Activated CD4-positive, alpha-beta memory T cell treated with anti-CD3 and anti-CD28 coated beads for 36 hours (primary cell): ENCODE measurements at regions of chr12 and their contacts with region 1.

Region 1: GRCh38 chr12:94710933-94711332 is 60.6 kb upstream of the TMCC3 start:
- DNase-seq: peak; percentile 32
- H3K4me3 Mint-ChIP-seq: no peak overlapping the region
- H3K27ac Mint-ChIP-seq: no peak overlapping the region
- H3K4me1 Mint-ChIP-seq: peaks cover 4% of the 10 kb centered on the region
- H3K27me3 Mint-ChIP-seq: no peaks in the 10 kb centered on the region

Region 2: DNA sequence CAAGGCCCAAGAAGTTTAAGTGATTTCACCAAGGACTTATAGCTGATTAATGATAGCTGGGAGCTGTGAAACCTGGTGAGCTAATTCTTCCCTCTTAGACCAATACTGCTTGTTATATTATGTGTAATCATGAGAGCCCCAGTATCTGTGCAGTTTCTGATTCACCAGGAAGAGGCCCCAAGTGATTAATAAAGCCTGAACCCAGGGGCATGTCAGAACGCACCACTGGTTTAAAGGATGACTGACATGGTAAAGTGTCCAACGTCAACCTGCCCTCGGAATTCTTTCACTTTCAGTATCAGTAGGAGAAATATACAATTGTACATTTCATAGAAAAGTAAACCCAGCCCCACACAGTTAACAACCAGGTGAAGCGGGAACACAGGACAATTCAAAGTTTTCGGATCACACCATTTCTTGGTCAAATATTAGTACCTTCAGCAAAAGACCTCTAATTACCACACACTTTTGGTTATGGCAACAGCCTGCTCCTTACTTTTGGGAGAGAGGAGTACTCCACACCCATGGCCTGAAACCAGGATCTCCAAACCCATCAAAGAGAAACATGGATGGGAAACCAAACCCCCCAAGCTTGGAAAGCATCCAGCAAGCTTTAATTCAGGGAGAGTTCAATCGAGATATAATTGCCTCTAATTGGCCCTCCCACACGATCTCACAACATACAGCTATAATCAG is 89.1 kb before region 1 on chr12:
- CTCF ChIA-PET with region 1: no interaction called
- POLR2A ChIA-PET with region 1: no interaction called
- intact Hi-C with region 1: loop called (anchors 1 kb)
- DNase-seq: peak; percentile 67
- H3K4me3 Mint-ChIP-seq: peak overlapping the region; percentile 23
- H3K27ac Mint-ChIP-seq: peak overlapping the region; percentile 56
- H3K4me1 Mint-ChIP-seq: peaks cover 22% of the 10 kb centered on the region
- H3K27me3 Mint-ChIP-seq: no peaks in the 10 kb centered on the region

Region 3: DNA sequence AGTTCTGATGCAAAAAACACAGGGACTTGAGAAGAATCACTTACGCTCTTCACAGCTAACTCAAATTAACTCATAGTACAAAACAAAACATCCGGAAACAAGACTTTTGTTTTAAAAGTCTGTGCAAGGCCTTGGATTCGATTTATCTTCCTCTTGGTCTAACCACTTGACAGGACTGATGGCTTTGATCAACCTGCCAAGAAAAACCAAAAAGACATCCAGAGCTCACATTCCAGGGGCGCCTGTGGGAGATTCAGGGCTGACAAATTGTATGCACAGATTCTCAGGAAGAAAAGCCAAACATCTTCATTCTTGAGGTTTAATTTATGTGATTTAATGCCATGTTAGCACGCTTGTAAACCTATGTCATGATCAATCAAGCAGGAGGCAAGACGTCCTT is 68.6 kb after region 1 on chr12:
- CTCF ChIA-PET with region 1: no interaction called
- POLR2A ChIA-PET with region 1: no interaction called
- intact Hi-C with region 1: no loop called
- DNase-seq: no peak
- H3K4me3 Mint-ChIP-seq: no peak overlapping the region
- H3K27ac Mint-ChIP-seq: no peak overlapping the region
- H3K4me1 Mint-ChIP-seq: no peaks in the 10 kb centered on the region
- H3K27me3 Mint-ChIP-seq: peaks cover 19% of the 10 kb centered on the region

Region 4: GRCh38 chr12:94875525-94875924 is 164.6 kb after region 1 on chr12:
- CTCF ChIA-PET with region 1: no interaction called
- POLR2A ChIA-PET with region 1: no interaction called
- intact Hi-C with region 1: loop called (anchors 5 kb)
- DNase-seq: peak; percentile 23
- H3K4me3 Mint-ChIP-seq: no peak overlapping the region
- H3K27ac Mint-ChIP-seq: no peak overlapping the region
- H3K4me1 Mint-ChIP-seq: peaks cover 17% of the 10 kb centered on the region
- H3K27me3 Mint-ChIP-seq: peaks cover 55% of the 10 kb centered on the region